HCT116 (cell line): ENCODE measurements at regions of chr12 and their contacts with region 1.

Region 1: GRCh38 chr12:13211859-13212664 is 15.5 kb downstream of the EMP1 start:
- DNase-seq: peak; percentile 53
- ATAC-seq: peak; percentile 57
- H3K4me3 ChIP-seq: no peak overlapping the region; a peak in 1 of 4 replicates
- H3K27ac ChIP-seq: peak overlapping the region; percentile 4; the same call in 1 of the 2 replicates
- H3K4me1 ChIP-seq: peaks cover 34 to 52% of the 10 kb centered on the region in 2 experiments
- H3K27me3 ChIP-seq: no peaks in the 10 kb centered on the region
- CTCF ChIP-seq: peak; percentile 75 to 82 (median 75)
- POLR2A ChIP-seq: no peak
- RAD21 ChIP-seq: peak; percentile 84

Region 2: DNA sequence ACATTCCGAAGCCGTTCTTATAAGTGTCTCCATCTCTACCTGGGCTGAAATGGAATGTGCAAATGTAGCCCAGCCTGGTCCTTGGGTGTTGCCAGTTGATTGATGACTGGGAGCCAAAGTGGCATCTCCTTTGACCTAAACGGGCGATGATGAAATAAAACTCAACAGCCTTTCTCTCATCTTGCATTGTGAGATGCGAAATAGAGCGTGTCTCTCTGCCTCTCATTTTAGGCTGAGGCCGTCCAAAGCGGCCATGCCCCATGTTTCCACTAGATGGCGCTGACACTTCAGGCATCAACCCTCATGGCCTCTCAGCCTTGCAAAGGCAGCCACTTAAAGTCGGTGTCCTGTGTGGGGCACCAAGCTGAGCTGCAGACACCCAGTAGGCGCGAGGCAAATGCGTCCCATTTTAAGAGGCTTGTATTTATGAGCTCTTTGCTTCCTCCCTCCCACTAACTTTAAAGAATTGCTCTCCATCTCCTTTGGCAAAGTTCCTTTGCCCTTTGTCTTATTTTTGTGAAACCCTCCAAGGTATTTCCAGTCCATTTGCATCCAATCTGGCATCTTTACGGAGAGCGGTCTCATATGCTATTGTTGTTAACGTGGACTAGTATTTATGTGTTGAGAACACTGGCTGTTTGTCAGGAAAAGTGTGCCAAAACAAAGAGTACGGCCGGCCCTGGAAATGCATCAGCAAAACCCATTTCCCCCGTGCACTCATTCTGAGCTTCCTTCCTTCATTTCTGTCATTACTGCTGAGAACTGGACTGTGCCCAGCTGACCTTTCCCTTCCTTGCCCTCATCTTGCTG is 295.7 kb before region 1 on chr12:
- CTCF ChIA-PET with region 1: interaction called, 3 read pairs
- POLR2A ChIA-PET with region 1: no interaction called
- RAD21 ChIA-PET with region 1: no interaction called
- intact Hi-C with region 1: loop called (anchors 1 kb)
- DNase-seq: peak; percentile 48
- ATAC-seq: peak; percentile 81
- H3K4me3 ChIP-seq: no peak overlapping the region
- H3K27ac ChIP-seq: peak overlapping the region; percentile 13; the same call in 1 of the 2 replicates
- H3K4me1 ChIP-seq: peaks cover 0 to 30% of the 10 kb centered on the region in 2 experiments; a peak in 3 of 4 replicates
- H3K27me3 ChIP-seq: no peaks in the 10 kb centered on the region
- CTCF ChIP-seq: peak; percentile 67 to 98 (median 93); a peak in 5 of 6 replicates
- POLR2A ChIP-seq: no peak
- RAD21 ChIP-seq: peak; percentile 84

Region 3: GRCh38 chr12:12999959-13000615 is 212.0 kb before region 1 on chr12 and contains the start of gene HEBP1:
- CTCF ChIA-PET with region 1: no interaction called
- POLR2A ChIA-PET with region 1: no interaction called
- RAD21 ChIA-PET with region 1: no interaction called
- intact Hi-C with region 1: loop called (anchors 5 kb)
- DNase-seq: peak; percentile 69
- ATAC-seq: peak; percentile 83
- H3K4me3 ChIP-seq: peak within 1 kb of the TSS; percentile 72 to 90
- H3K27ac ChIP-seq: peak within 1 kb of the TSS; percentile 55
- H3K4me1 ChIP-seq: peaks cover 3 to 18% of the 10 kb centered on the region in 2 experiments; a peak in 3 of 4 replicates
- H3K27me3 ChIP-seq: no peaks in the 10 kb centered on the region
- CTCF ChIP-seq: no peak
- POLR2A ChIP-seq: no peak
- RAD21 ChIP-seq: no peak
- total RNA-seq, gene HEBP1: 41.0 TPM

Region 4: GRCh38 chr12:13100882-13101769 is 110.9 kb before region 1 on chr12:
- CTCF ChIA-PET with region 1: interaction called, 27 read pairs
- POLR2A ChIA-PET with region 1: interaction called, 11 read pairs
- RAD21 ChIA-PET with region 1: interaction called, 6 to 14 read pairs
- intact Hi-C with region 1: no loop called
- DNase-seq: peak; percentile 67
- ATAC-seq: peak; percentile 65
- H3K4me3 ChIP-seq: peak overlapping the region; percentile 48 to 64
- H3K27ac ChIP-seq: peak overlapping the region; percentile 92
- H3K4me1 ChIP-seq: peaks cover 44 to 70% of the 10 kb centered on the region in 2 experiments
- H3K27me3 ChIP-seq: no peaks in the 10 kb centered on the region
- CTCF ChIP-seq: no peak
- POLR2A ChIP-seq: no peak
- RAD21 ChIP-seq: no peak